ENCODE measurements at regions of chr15 and their contacts with region 1.

Region 1: DNA sequence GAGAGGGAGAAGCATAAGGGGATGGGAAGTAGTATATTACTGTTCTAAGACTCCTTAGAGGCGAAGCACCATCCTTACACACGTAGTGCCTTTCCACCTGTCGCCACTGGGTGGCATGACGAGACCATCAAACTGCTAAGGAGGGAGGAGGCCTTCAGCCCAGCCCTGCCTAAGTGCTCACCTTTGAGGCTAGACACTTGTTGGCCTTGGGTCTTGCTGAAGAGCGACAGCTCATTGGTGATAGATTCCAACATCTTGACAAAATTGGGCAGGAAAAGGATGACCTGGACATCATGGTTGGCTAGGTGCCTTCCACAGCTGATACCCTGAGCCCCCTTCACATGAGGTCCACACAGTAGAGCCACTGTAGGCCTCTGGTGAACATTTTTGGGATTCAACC is 19.6 kb downstream of the CLK3 start:
- DNase-seq: peak; percentile 81
- H3K4me3 Mint-ChIP-seq: no peak overlapping the region
- H3K27ac Mint-ChIP-seq: no peak overlapping the region
- H3K4me1 Mint-ChIP-seq: no peaks in the 10 kb centered on the region
- H3K27me3 Mint-ChIP-seq: no peaks in the 10 kb centered on the region
- CTCF ChIP-seq: peak; percentile 89

Region 2: DNA sequence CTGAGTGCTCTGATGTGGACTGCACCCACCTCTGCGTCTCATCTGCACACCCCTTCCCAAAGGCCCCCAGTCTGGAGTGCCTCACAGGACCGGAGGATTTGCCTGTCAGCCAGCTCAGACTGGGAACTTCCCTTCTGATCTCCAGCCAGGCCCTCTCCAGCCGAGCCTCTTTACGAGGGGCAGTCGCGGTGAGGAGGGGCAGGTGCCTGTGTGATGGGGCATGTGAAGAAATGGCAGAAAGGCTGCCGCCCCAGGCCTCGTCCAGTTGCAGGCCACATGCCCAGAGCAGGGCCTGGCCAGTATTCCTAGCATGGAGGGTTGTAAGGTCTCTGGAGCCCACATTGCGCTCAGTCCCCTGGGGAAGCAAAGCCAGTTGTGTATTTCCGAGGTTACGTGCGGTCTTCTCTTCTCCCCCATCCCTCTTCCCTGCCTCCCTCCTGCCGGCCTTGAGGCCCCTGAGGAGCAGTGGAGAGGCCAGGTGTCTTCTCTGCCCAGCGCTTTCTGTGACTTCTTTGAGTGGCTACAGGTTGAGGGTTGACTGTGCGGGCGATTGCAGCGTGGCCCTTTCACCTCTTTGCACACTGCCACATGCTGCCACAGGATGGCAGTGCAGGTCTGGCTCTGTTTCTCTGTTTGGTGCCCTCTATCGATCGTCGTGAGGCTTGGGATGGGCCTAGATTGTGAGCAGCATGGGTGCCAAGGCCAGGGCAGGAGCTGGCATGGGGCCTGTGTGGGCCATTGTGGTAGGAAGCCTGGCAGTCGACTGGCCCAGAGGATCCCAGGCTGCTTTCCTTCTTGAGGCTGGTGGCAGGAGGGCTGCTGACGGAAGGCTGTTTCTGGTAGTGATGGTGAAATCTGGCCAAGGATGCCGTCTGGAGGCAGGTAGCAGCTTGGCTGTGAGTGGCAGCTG is 14.3 kb before region 1 on chr15:
- CTCF ChIA-PET with region 1: interaction called, 90 read pairs
- POLR2A ChIA-PET with region 1: interaction called, 3 read pairs
- intact Hi-C with region 1: no loop called
- DNase-seq: peak; percentile 88
- H3K4me3 Mint-ChIP-seq: no peak overlapping the region
- H3K27ac Mint-ChIP-seq: peak overlapping the region; percentile 13
- H3K4me1 Mint-ChIP-seq: peaks cover 37% of the 10 kb centered on the region
- H3K27me3 Mint-ChIP-seq: no peaks in the 10 kb centered on the region
- CTCF ChIP-seq: peak; percentile 97

Region 3: DNA sequence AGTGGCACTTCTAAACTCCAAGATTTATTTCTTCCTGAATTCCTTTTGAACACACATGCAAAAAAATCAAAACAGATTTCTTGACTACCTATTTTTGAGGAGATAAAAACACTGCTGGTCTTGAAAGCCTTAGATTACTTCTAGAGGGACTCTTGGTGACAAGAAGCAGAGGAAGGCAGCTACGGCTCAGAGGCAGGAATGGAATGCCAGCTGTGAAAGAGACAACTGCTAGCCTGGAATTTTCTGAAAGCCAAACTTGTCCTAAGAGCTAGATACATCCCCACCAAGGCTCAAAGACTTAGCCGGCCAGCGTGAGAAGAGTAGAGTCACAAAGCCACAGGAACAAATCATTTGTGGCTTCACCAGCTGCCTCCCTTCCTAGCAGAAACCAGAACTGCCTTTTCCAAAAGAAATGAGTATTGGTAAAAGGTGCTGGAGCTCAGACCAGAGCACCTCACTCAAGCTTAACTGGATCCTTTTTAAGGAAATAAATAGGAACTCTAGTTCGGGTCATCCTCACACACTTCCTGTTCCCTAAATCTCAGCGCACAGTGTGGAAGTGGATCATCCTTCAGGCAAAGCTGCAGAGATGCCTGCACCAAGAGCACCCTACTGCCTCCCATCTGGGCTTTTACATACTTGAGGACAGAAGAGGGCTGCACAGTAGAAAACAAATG is 13.1 kb after region 1 on chr15:
- CTCF ChIA-PET with region 1: interaction called, 17 read pairs
- POLR2A ChIA-PET with region 1: interaction called, 3 read pairs
- intact Hi-C with region 1: no loop called
- DNase-seq: no peak
- H3K4me3 Mint-ChIP-seq: no peak overlapping the region
- H3K27ac Mint-ChIP-seq: no peak overlapping the region
- H3K4me1 Mint-ChIP-seq: peaks cover 8% of the 10 kb centered on the region
- H3K27me3 Mint-ChIP-seq: no peaks in the 10 kb centered on the region
- CTCF ChIP-seq: no peak

Region 4: GRCh38 chr15:74950078-74951000 is 315.1 kb after region 1 on chr15:
- CTCF ChIA-PET with region 1: interaction called, 23 read pairs
- POLR2A ChIA-PET with region 1: no interaction called
- intact Hi-C with region 1: loop called (anchors 1 kb)
- DNase-seq: peak; percentile 80
- H3K4me3 Mint-ChIP-seq: no peak overlapping the region
- H3K27ac Mint-ChIP-seq: no peak overlapping the region
- H3K4me1 Mint-ChIP-seq: peaks cover 7% of the 10 kb centered on the region
- H3K27me3 Mint-ChIP-seq: no peaks in the 10 kb centered on the region
- CTCF ChIP-seq: peak; percentile 97